ENCODE measurements at regions of chrX and their contacts with region 1.

Region 1: DNA sequence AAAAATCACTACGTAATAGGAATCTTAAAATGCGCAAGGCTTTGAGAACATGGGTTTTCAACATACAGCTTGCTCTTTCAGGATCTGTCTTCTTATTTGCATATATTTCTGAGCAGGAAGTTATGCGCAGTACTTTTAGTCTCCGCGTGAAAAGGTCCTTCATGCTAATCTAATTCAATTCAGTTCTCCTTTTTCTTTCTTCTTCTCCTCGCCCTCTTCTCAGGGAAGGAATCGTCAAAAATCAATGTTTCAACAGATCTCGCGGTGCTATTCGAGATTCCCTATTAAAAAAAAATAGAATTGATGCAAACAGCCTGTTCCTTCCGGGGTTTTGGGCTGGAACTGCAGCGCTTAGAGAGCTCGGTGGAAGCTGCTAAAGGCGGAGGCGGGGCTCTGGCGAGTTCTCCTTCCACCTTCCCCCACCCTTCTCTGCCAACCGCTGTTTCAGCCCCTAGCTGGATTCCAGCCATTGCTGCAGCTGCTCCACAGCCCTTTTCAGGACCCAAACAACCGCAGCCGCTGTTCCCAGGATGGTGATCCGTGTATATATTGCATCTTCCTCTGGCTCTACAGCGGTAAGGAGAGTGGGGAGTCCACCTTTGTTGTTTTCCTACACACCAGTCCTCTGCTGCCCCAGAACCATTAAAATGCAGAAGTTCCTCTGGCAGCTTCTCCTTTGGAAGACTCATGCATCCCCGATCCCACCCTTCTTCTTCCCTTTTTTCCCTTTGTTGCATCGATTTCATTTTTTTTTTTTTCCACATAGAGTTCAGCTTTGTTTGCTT is at the starts of genes HMGN5 and SH3BGRL:
- DNase-seq: peak; percentile 89
- H3K4me3 Mint-ChIP-seq: peak within 1 kb of the TSS; percentile 91
- H3K27ac Mint-ChIP-seq: peak within 1 kb of the TSS; percentile 95
- H3K4me1 Mint-ChIP-seq: peaks cover 29% of the 10 kb centered on the region
- H3K27me3 Mint-ChIP-seq: no peaks in the 10 kb centered on the region
- total RNA-seq, gene HMGN5: 0.88 and 1.5 TPM in 2 replicates
- total RNA-seq, gene SH3BGRL: 35.7 and 35.9 TPM in 2 replicates

Region 2: DNA sequence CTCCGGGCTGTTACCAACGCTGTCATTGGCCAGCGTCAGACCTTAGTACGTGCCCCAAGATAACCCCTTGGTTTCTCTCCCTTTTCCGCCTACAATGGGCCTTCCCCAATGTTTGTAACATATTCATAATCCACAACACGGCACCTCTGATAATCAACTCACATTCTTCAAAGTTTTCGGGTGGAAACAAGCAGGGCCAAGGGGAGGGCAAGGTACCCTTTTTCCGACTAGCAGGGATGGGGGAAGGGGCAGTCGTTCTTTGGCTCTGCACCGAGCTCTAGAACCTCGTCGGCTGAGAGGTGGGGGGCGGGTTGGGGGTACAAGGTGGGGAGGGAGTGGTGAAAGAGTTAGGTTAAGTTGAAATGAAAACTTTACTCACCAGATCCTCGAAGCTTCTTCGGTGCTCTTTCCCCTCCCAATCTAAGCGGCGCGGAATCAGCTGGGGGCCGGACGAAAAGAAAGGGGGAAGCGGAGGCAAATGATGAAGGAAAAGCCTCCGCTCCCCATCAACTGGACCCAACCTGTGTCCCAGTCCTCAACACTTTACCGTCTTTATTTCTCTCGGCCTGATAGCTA is 393.6 kb before region 1 on chrX:
- intact Hi-C with region 1: loop called (anchors 2 kb)
- DNase-seq: peak; percentile 93
- H3K4me3 Mint-ChIP-seq: peak overlapping the region; percentile 92
- H3K27ac Mint-ChIP-seq: peak overlapping the region; percentile 95
- H3K4me1 Mint-ChIP-seq: peaks cover 10% of the 10 kb centered on the region
- H3K27me3 Mint-ChIP-seq: peaks cover 2% of the 10 kb centered on the region

Region 3: DNA sequence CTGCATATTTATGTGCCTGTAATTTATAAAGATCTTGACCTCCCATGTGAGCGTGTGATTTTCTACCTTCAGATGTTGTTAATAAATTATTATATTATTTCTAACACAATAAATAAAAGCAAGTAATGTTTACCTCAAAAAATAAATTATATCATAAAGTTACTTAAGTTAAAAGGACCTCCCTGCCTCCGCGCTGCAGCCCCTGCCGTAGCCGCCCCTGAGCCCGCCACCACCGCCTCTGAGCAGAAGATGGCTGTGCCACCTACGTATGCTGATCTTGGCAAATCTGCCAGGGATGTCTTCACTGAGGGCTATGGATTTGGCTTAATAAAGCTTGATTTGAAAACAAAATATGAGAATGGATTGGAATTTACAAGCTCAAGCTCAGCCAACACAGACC is 272.6 kb before region 1 on chrX:
- intact Hi-C with region 1: no loop called
- DNase-seq: no peak
- H3K4me3 Mint-ChIP-seq: no peak overlapping the region
- H3K27ac Mint-ChIP-seq: no peak overlapping the region
- H3K4me1 Mint-ChIP-seq: no peaks in the 10 kb centered on the region
- H3K27me3 Mint-ChIP-seq: no peaks in the 10 kb centered on the region

Region 4: DNA sequence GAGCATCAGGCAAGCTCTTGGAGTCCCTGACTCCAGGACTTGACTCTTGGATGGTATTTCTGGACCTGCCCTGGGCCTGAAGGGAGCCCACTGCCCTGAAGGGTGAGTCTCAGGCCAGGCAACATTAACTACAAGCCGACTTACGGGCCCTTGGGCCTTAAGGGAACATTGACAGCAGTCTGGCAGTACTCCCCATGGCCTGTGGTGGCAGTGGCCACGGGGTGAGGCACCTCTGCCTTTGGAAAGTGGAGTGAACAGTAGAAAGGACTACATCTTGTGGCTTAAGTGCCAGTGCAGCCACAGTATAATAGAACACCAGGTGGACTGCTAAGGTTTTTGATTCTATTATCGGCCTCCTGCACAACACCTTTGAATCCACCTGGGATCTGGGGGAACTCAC is 36.3 kb after region 1 on chrX:
- intact Hi-C with region 1: no loop called
- DNase-seq: no peak
- H3K4me3 Mint-ChIP-seq: no peak overlapping the region
- H3K27ac Mint-ChIP-seq: no peak overlapping the region
- H3K4me1 Mint-ChIP-seq: no peaks in the 10 kb centered on the region
- H3K27me3 Mint-ChIP-seq: no peaks in the 10 kb centered on the region

Region 5: GRCh38 chrX:81259714-81260395 is 58.0 kb after region 1 on chrX:
- intact Hi-C with region 1: loop called (anchors 10 kb)
- DNase-seq: no peak
- H3K4me3 Mint-ChIP-seq: no peak overlapping the region
- H3K27ac Mint-ChIP-seq: no peak overlapping the region
- H3K4me1 Mint-ChIP-seq: peaks cover 2% of the 10 kb centered on the region
- H3K27me3 Mint-ChIP-seq: no peaks in the 10 kb centered on the region

Region 6: GRCh38 chrX:81414630-81415029 is 212.8 kb after region 1 on chrX:
- intact Hi-C with region 1: no loop called
- DNase-seq: no peak
- H3K4me3 Mint-ChIP-seq: no peak overlapping the region
- H3K27ac Mint-ChIP-seq: no peak overlapping the region
- H3K4me1 Mint-ChIP-seq: no peaks in the 10 kb centered on the region
- H3K27me3 Mint-ChIP-seq: no peaks in the 10 kb centered on the region